Calu3 (cell line): ENCODE measurements at regions of chr12 and their contacts with region 1.

Region 1: GRCh38 chr12:52870351-52871290 is 21.8 kb upstream of the KRT78 start:
- DNase-seq: peak; percentile 81
- H3K4me3 Mint-ChIP-seq: no peak overlapping the region
- H3K27ac Mint-ChIP-seq: peak overlapping the region; percentile 99
- H3K4me1 Mint-ChIP-seq: peaks cover 67% of the 10 kb centered on the region
- H3K27me3 Mint-ChIP-seq: no peaks in the 10 kb centered on the region
- CTCF ChIP-seq: peak; percentile 39

Region 2: GRCh38 chr12:52582971-52583456 is 287.6 kb before region 1 on chr12:
- CTCF ChIA-PET with region 1: interaction called, 3 read pairs
- intact Hi-C with region 1: loop called (anchors 2 kb)
- DNase-seq: peak; percentile 58
- H3K4me3 Mint-ChIP-seq: no peak overlapping the region
- H3K27ac Mint-ChIP-seq: no peak overlapping the region
- H3K4me1 Mint-ChIP-seq: peaks cover 10% of the 10 kb centered on the region
- H3K27me3 Mint-ChIP-seq: peaks cover 48% of the 10 kb centered on the region
- CTCF ChIP-seq: peak; percentile 53

Region 3: DNA sequence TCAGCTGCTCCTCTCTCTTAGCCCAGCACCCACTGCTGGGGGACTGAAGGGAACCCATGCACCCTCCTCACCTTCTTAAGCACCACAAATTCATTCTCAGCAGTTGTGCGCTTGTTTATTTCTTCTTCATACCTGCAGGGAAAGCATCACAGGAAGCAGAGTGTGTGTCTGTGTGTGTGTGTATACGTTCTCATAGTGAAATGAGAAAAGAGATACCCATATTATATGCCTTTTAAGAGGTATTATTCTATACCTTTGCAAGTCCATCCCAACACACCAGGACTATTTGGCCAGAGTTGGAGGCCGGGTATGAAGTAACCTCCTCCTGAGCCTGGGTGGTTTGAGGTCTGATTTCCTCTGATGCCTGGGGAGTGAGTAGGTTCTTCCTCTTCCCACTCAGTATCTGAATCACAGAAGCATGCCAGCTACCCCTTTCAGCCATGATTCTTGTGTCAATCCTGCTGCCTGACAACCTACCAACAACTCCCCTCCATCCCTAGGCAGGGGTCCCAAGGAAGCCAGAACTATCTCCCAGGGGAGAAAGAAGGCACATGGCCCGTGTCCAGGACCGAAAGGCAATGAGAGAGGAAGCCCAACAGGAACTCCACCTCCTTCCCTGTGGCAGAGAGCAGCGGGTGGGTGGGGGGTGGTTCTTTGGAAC is 255.3 kb before region 1 on chr12:
- CTCF ChIA-PET with region 1: no interaction called
- intact Hi-C with region 1: no loop called
- DNase-seq: no peak
- H3K4me3 Mint-ChIP-seq: no peak overlapping the region
- H3K27ac Mint-ChIP-seq: no peak overlapping the region
- H3K4me1 Mint-ChIP-seq: no peaks in the 10 kb centered on the region
- H3K27me3 Mint-ChIP-seq: peaks cover 100% of the 10 kb centered on the region
- CTCF ChIP-seq: no peak